ENCODE measurements at regions of chr2 and their contacts with region 1.

Region 1: GRCh38 chr2:236887531-236887930 is 198.2 kb upstream of the COPS8 start:
- DNase-seq: peak; percentile 79 to 86
- ATAC-seq: peak; percentile 23
- H3K4me3 ChIP-seq: no peak overlapping the region
- H3K27ac ChIP-seq: peak overlapping the region; percentile 74 to 92
- H3K4me1 ChIP-seq: peaks cover 5 to 6% of the 10 kb centered on the region in 2 donors
- H3K27me3 ChIP-seq: no peaks in the 10 kb centered on the region

Region 2: DNA sequence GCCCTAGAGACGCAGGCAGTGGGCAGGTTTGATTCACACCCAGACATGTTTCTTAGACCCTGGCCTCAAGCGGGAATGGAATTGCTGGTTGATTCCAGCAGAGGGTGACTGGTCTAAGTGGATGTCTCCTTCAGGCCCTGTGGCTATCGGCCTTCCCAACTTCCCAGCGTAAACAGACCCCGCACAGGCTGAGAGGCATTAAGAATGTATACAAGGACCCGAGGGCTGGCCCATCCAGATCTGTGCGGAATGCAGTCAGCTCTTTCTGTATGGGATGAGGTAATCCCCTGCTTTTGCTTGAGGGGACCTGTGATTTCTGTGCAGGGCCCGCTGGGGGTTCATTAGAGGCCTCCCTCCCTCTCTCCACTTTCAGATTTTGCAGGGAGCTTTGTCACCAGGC is 311.4 kb before region 1 on chr2:
- intact Hi-C with region 1: loop called in 1 of 2 experiments (anchors 10 kb)
- DNase-seq: no peak
- ATAC-seq: no peak
- H3K4me3 ChIP-seq: no peak overlapping the region
- H3K27ac ChIP-seq: no peak overlapping the region
- H3K4me1 ChIP-seq: peaks cover 0 to 13% of the 10 kb centered on the region in 2 donors
- H3K27me3 ChIP-seq: no peaks in the 10 kb centered on the region

Region 3: GRCh38 chr2:236794174-236794957 is 93.2 kb before region 1 on chr2:
- intact Hi-C with region 1: loop called in 1 of 2 experiments (anchors 10 kb)
- DNase-seq: no peak
- ATAC-seq: no peak
- H3K4me3 ChIP-seq: no peak overlapping the region
- H3K27ac ChIP-seq: no peak overlapping the region
- H3K4me1 ChIP-seq: no peaks in the 10 kb centered on the region
- H3K27me3 ChIP-seq: no peaks in the 10 kb centered on the region

Region 4: GRCh38 chr2:236803621-236804020 is 83.9 kb before region 1 on chr2:
- intact Hi-C with region 1: loop called (anchors 10 kb)
- DNase-seq: peak in 1 of 2 donors; percentile 68
- ATAC-seq: no peak
- H3K4me3 ChIP-seq: no peak overlapping the region
- H3K27ac ChIP-seq: no peak overlapping the region
- H3K4me1 ChIP-seq: no peaks in the 10 kb centered on the region
- H3K27me3 ChIP-seq: no peaks in the 10 kb centered on the region

Region 5: DNA sequence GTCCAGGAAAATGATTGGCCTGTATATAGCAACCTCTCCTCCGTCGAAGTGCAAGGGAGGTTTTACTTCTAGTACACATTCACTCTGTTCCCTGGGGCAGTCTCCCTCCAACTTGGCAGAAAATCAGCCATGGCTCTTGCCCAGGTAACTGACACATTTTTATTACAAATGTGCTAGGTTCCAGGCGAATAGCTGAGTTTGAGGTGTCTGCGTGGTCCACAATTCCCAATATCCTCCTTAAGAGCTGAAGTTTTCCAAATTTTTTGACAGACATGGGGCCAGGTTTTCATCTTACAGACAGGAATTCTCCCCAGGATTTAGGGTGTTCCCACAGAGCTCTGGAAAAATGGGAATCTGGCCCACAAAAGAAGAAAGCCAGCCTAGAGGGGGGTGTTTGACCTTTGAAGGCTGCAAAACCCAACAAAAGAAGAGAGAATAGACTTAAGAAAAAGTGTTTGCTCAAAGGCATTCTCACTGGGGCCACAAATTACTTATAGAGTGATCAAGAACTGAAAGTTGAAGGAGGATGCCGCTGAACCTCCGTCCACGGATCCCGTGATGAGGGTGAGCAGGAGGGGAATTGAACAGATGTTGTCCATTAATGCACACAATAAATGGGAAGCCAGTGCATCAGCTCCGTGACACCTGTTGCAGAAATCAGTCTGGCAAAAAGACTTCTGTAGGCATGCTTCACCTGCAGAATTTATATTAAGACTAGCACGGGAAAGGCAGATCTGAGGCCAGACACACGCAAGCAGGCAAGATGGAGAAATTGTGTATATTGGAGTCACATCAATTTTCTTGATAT is 44.2 kb before region 1 on chr2:
- intact Hi-C with region 1: loop called in 1 of 2 experiments (anchors 5 kb)
- DNase-seq: no peak
- ATAC-seq: no peak
- H3K4me3 ChIP-seq: no peak overlapping the region
- H3K27ac ChIP-seq: peak overlapping the region in 1 of 2 donors; percentile 34
- H3K4me1 ChIP-seq: peaks cover 0 to 9% of the 10 kb centered on the region in 2 donors
- H3K27me3 ChIP-seq: no peaks in the 10 kb centered on the region

Measured in aorta (tissue), 5 donors.